Panc1 (cell line): ENCODE measurements at regions of chr11 and their contacts with region 1.

Region 1: DNA sequence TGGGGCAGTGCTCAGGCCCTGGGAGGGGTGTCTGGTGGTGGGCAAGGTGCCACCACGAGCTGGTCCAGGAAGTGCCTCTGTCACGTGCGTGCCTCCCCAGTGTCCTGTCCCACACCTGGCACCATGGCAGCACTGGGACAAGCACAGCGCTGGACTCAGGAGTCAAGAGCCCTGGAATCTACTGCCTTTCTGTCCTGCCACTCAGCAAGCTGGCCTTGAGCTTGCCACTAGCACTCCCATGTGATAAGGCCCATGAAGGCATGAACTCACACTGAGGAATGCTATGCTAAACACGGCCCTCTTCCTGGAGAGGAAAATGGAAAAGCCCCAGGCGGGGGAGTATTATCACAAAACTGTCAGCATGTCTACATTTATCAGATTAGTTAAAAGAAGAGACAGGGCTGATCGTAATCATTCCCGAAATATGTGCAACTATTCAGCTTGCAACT is 50.7 kb upstream of the SLC35C1 start:
- DNase-seq: no peak
- ATAC-seq: 0 out of 2 replicates have a peak, but pooled peaks have one; percentile 35
- H3K4me3 ChIP-seq: no peak overlapping the region
- H3K27ac ChIP-seq: no peak overlapping the region
- H3K4me1 ChIP-seq: no peaks in the 10 kb centered on the region
- H3K27me3 ChIP-seq: peaks cover 2% of the 10 kb centered on the region; the same call in 1 of the 2 replicates
- CTCF ChIP-seq: no peak

Region 2: GRCh38 chr11:45692808-45693453 is 61.4 kb before region 1 on chr11:
- CTCF ChIA-PET with region 1: no interaction called
- POLR2A ChIA-PET with region 1: no interaction called
- in situ Hi-C with region 1: no loop called
- intact Hi-C with region 1: loop called (anchors 10 kb)
- DNase-seq: no peak
- ATAC-seq: no peak
- H3K4me3 ChIP-seq: no peak overlapping the region
- H3K27ac ChIP-seq: no peak overlapping the region
- H3K4me1 ChIP-seq: no peaks in the 10 kb centered on the region
- H3K27me3 ChIP-seq: peaks cover 13% of the 10 kb centered on the region
- CTCF ChIP-seq: no peak